Lower leg skin (tissue), 4 donors: ENCODE measurements at regions of chr2 and their contacts with region 1.

Region 1: DNA sequence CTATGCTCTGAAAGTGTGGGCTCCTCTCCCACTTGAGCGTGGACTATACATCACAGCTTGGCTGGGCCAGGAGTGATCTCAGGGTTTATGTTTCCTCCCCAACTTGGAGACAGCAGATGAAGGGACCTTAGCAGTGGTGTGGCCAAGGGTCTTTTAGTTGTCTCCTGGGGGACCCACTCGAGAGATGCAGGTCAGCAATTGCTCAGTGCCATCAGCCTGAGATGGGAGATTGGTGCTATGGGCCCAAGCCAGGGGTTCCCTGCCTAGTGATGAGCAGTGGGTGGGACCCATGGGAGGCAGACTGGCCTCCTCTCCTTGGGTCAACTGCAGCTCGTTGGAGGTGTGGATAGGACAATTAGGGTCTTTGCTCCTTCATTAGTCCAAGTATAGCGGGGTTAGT is 510.5 kb upstream of the FSHR start:
- DNase-seq: no peak
- H3K4me3 ChIP-seq: no peak overlapping the region
- CTCF ChIP-seq: no peak
- POLR2A ChIP-seq: no peak

Region 2: GRCh38 chr2:49123600-49123999 is 541.2 kb before region 1 on chr2:
- intact Hi-C with region 1: loop called (anchors 5 kb)
- DNase-seq: no peak
- H3K4me3 ChIP-seq: no peak overlapping the region
- CTCF ChIP-seq: no peak
- POLR2A ChIP-seq: no peak